PC-3 (cell line): ENCODE measurements at regions of chr1 and their contacts with region 1.

Region 1: GRCh38 chr1:94854458-94855306 is 34.5 kb downstream of the SLC44A3 start:
- DNase-seq: peak; percentile 99
- ATAC-seq: peak; percentile 84
- H3K4me3 ChIP-seq: peak overlapping the region; percentile 65
- H3K27ac ChIP-seq: peak overlapping the region; percentile 97
- H3K4me1 ChIP-seq: peaks cover 60% of the 10 kb centered on the region
- H3K27me3 ChIP-seq: no peaks in the 10 kb centered on the region
- CTCF ChIP-seq: peak; percentile 92

Region 2: GRCh38 chr1:94971491-94971924 is 116.8 kb after region 1 on chr1:
- CTCF ChIA-PET with region 1: no interaction called
- POLR2A ChIA-PET with region 1: no interaction called
- intact Hi-C with region 1: no loop called
- DNase-seq: peak; percentile 75
- ATAC-seq: peak; percentile 61
- H3K4me3 ChIP-seq: no peak overlapping the region
- H3K27ac ChIP-seq: no peak overlapping the region
- H3K4me1 ChIP-seq: peaks cover 33% of the 10 kb centered on the region
- H3K27me3 ChIP-seq: no peaks in the 10 kb centered on the region
- CTCF ChIP-seq: no peak

Region 3: GRCh38 chr1:95023399-95024043 is 168.8 kb after region 1 on chr1:
- CTCF ChIA-PET with region 1: interaction called, 14 read pairs
- POLR2A ChIA-PET with region 1: no interaction called
- intact Hi-C with region 1: no loop called
- DNase-seq: peak; percentile 79
- ATAC-seq: peak; percentile 93
- H3K4me3 ChIP-seq: peak overlapping the region; percentile 15; the same call in 1 of the 2 replicates
- H3K27ac ChIP-seq: peak overlapping the region; percentile 63
- H3K4me1 ChIP-seq: peaks cover 39% of the 10 kb centered on the region
- H3K27me3 ChIP-seq: no peaks in the 10 kb centered on the region
- CTCF ChIP-seq: no peak